ENCODE measurements at regions of chr1 and their contacts with region 1.

Region 1: GRCh38 chr1:66242646-66243547 is 291.1 kb upstream of the SGIP1 start:
- DNase-seq: peak; percentile 83
- H3K4me3 Mint-ChIP-seq: no peak overlapping the region
- H3K27ac Mint-ChIP-seq: no peak overlapping the region
- H3K4me1 Mint-ChIP-seq: peaks cover 33% of the 10 kb centered on the region
- H3K27me3 Mint-ChIP-seq: peaks cover 4% of the 10 kb centered on the region

Region 2: GRCh38 chr1:65958561-65959350 is 284.1 kb before region 1 on chr1:
- CTCF ChIA-PET with region 1: interaction called, 30 read pairs
- POLR2A ChIA-PET with region 1: no interaction called
- DNase-seq: peak; percentile 51
- H3K4me3 Mint-ChIP-seq: no peak overlapping the region
- H3K27ac Mint-ChIP-seq: no peak overlapping the region
- H3K4me1 Mint-ChIP-seq: peaks cover 6% of the 10 kb centered on the region
- H3K27me3 Mint-ChIP-seq: peaks cover 4% of the 10 kb centered on the region

Region 3: GRCh38 chr1:66223681-66224080 is 19.2 kb before region 1 on chr1:
- CTCF ChIA-PET with region 1: interaction called, 12 read pairs
- POLR2A ChIA-PET with region 1: no interaction called
- DNase-seq: no peak
- H3K4me3 Mint-ChIP-seq: no peak overlapping the region
- H3K27ac Mint-ChIP-seq: no peak overlapping the region
- H3K4me1 Mint-ChIP-seq: no peaks in the 10 kb centered on the region
- H3K27me3 Mint-ChIP-seq: no peaks in the 10 kb centered on the region

Region 4: DNA sequence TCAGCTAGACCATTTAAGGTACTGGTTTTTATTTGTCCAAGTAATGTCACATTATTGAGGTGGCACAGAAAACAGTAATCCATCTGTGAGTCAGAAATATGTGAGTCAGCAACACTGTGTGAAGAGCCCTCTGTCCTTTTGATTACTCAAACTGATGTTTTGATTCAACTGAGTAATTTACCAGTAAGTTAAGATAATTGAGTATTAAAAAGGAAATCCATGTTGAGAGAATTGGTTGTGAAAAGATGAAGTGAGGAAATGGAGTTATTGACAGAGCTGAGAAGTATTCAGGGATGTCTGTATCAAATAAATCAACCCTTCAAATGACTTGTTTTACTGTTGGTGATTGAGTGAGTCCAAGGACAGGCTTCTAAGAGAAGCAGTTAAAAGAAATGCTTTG is 11.7 kb before region 1 on chr1:
- CTCF ChIA-PET with region 1: interaction called, 12 read pairs
- POLR2A ChIA-PET with region 1: no interaction called
- DNase-seq: no peak
- H3K4me3 Mint-ChIP-seq: no peak overlapping the region
- H3K27ac Mint-ChIP-seq: no peak overlapping the region
- H3K4me1 Mint-ChIP-seq: peaks cover 2% of the 10 kb centered on the region
- H3K27me3 Mint-ChIP-seq: peaks cover 2% of the 10 kb centered on the region

Region 5: GRCh38 chr1:66436378-66437145 is 193.7 kb after region 1 on chr1:
- CTCF ChIA-PET with region 1: interaction called, 21 read pairs
- POLR2A ChIA-PET with region 1: no interaction called
- DNase-seq: peak; percentile 43
- H3K4me3 Mint-ChIP-seq: no peak overlapping the region
- H3K27ac Mint-ChIP-seq: peak overlapping the region; percentile 76
- H3K4me1 Mint-ChIP-seq: peaks cover 38% of the 10 kb centered on the region
- H3K27me3 Mint-ChIP-seq: no peaks in the 10 kb centered on the region

Region 6: GRCh38 chr1:66446261-66447001 is 203.5 kb after region 1 on chr1:
- CTCF ChIA-PET with region 1: interaction called, 240 read pairs
- POLR2A ChIA-PET with region 1: interaction called, 4 read pairs
- DNase-seq: peak; percentile 72
- H3K4me3 Mint-ChIP-seq: peak overlapping the region; percentile 17
- H3K27ac Mint-ChIP-seq: peak overlapping the region; percentile 95
- H3K4me1 Mint-ChIP-seq: peaks cover 30% of the 10 kb centered on the region
- H3K27me3 Mint-ChIP-seq: peaks cover 13% of the 10 kb centered on the region